Psoas muscle (tissue), 8 donors: ENCODE measurements at regions of chr13 and their contacts with region 1.

Region 1: GRCh38 chr13:102710261-102710679 is 15.4 kb upstream of the METTL21C start:
- DNase-seq: peak in 1 of 2 donors; percentile 19
- ATAC-seq: peak; percentile 96 to 98 (median 96)
- H3K4me3 ChIP-seq: no peak overlapping the region
- H3K27ac ChIP-seq: peak overlapping the region; percentile 92
- H3K4me1 ChIP-seq: peaks cover 38% of the 10 kb centered on the region
- H3K27me3 ChIP-seq: no peaks in the 10 kb centered on the region
- CTCF ChIP-seq: no peak

Region 2: GRCh38 chr13:102678339-102679107 is 31.7 kb before region 1 on chr13:
- intact Hi-C with region 1: loop called in 1 of 2 experiments (anchors 5 kb)
- DNase-seq: no peak
- ATAC-seq: peak; percentile 78 to 85 (median 80)
- H3K4me3 ChIP-seq: no peak overlapping the region
- H3K27ac ChIP-seq: peak overlapping the region; percentile 70
- H3K4me1 ChIP-seq: peaks cover 51% of the 10 kb centered on the region
- H3K27me3 ChIP-seq: no peaks in the 10 kb centered on the region
- CTCF ChIP-seq: no peak